GM18951 (cell line): ENCODE measurements at regions of chr5 and their contacts with region 1.

Region 1: DNA sequence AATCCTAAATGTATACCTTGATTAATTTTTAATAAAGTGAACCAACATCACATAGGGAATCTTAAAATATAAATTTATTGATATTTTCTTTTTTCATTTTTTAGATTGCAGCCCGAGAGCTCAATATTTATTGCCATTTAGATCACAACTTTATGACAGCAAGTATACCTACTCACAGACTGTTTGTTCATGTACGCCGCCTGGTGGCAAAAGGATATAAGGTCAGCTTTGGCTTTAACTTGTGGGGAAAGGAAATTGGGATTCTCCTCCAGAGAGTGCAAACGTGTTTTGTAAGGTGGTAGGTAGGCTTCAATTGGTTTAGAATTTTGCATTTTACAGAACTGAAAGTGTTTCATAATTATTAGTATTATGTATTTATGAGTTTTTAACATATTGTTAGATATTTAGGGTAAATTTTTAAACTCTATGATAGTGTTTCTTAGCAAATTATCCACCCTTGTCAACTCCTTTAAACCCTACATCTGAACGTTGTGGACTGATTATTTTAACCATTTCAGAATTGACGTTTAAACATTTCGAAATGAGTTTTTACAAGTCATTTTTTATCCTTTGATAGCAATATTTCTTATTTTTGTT is 17.5 kb upstream of the DHFR start:
- POLR2A ChIP-seq: no peak

Region 2: GRCh38 chr5:80481019-80481893 is 191.0 kb before region 1 on chr5:
- in situ Hi-C with region 1: loop called (anchors 5 kb)
- POLR2A ChIP-seq: no peak

Region 3: GRCh38 chr5:80591352-80591751 is 80.9 kb before region 1 on chr5:
- in situ Hi-C with region 1: no loop called
- POLR2A ChIP-seq: no peak